ENCODE measurements at regions of chr12 and their contacts with region 1.

Region 1: GRCh38 chr12:47779301-47779942 is 6.4 kb downstream of the SLC48A1 start:
- DNase-seq: peak; percentile 97
- ATAC-seq: peak; percentile 85
- H3K4me3 Mint-ChIP-seq: peak overlapping the region; percentile 44
- H3K27ac Mint-ChIP-seq: peak overlapping the region; percentile 37; the same call in 1 of the 2 replicates
- H3K4me1 Mint-ChIP-seq: peaks cover 32% of the 10 kb centered on the region
- H3K27me3 Mint-ChIP-seq: peaks cover 11% of the 10 kb centered on the region
- CTCF ChIP-seq: peak; percentile 93

Region 2: GRCh38 chr12:47591361-47591791 is 188.0 kb before region 1 on chr12:
- CTCF ChIA-PET with region 1: no interaction called
- POLR2A ChIA-PET with region 1: no interaction called
- DNase-seq: no peak
- ATAC-seq: 0 out of 2 replicates have a peak, but pooled peaks have one; percentile 32
- H3K4me3 Mint-ChIP-seq: no peak overlapping the region
- H3K27ac Mint-ChIP-seq: no peak overlapping the region
- H3K4me1 Mint-ChIP-seq: peaks cover 13% of the 10 kb centered on the region
- H3K27me3 Mint-ChIP-seq: no peaks in the 10 kb centered on the region; the same call in 1 of the 2 replicates
- CTCF ChIP-seq: no peak

Region 3: DNA sequence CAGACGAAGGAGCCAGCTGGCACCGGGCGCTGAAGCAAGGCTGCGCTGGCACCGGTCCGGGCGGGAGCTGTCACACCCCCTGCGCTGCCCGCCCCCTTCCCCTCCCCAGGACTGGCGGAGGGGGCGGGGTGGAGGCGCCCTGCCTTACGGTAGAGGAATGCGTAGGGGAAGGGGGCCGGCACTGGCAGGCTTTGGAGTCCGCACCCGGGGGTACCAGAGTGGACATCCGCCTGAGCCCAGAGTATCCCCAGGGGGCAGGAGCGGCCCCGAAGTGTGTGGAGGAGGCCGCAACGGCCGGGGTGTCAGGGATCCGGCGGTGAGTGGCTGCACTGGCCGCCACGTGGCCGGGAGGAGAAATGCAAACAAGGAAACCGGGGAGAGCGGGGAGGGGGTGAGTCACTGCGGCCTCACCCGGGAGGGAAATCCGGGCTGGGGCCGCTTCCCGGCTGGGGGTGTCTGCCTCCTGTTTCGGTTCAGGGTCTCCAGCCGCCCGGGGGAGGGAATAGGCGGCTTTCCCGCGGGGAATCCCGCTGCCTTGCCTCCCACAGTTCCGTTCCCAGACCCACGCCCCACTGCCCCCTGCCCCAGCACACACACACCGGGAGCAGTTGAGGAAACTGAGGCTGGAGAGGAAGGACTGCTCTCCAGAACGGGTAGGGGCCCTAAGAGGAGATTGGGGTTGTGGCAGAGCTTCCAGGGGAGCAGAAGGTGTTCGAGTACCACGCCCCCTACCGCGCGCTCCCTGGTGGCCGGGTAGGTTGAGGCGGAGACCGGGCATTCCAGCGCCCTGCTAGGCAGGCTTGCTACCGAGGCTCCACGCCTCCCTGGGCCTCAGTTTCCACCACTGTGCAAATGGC is 20.4 kb before region 1 on chr12 and contains the start of gene RAPGEF3:
- CTCF ChIA-PET with region 1: interaction called, 67 read pairs
- POLR2A ChIA-PET with region 1: no interaction called
- DNase-seq: peak; percentile 74
- ATAC-seq: peak; percentile 79
- H3K4me3 Mint-ChIP-seq: peak within 1 kb of the TSS; percentile 67
- H3K27ac Mint-ChIP-seq: no peak within 1 kb of the TSS
- H3K4me1 Mint-ChIP-seq: peaks cover 53% of the 10 kb centered on the region
- H3K27me3 Mint-ChIP-seq: no peaks in the 10 kb centered on the region; the same call in 1 of the 2 replicates
- CTCF ChIP-seq: no peak; the same call in 1 of the 2 replicates
- total RNA-seq, gene RAPGEF3: 9.0 to 13.3 TPM (median 9.7 TPM) in 3 replicates

Region 4: DNA sequence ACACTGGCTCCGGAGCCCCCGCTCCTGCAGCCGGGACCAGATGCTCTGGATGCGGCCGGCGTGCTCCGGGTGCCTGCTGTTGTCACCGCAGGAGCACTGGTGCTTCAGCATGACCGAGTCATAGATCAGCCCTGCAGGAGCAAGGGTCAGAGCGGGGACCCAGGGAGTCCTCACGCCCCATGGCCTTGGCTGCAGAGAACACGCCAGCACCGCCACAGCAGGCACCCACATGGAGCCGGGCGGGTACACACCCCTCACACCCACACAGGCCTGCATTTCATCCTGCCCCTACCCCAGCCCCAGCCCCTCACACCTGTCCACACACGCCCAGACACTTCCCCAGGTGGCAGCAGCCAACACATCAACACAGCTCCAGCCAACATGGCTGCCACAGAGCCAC is 12.5 kb after region 1 on chr12:
- CTCF ChIA-PET with region 1: interaction called, 49 read pairs
- POLR2A ChIA-PET with region 1: no interaction called
- DNase-seq: no peak
- ATAC-seq: no peak
- H3K4me3 Mint-ChIP-seq: no peak overlapping the region
- H3K27ac Mint-ChIP-seq: peak overlapping the region; percentile 72; the same call in 1 of the 2 replicates
- H3K4me1 Mint-ChIP-seq: no peaks in the 10 kb centered on the region
- H3K27me3 Mint-ChIP-seq: no peaks in the 10 kb centered on the region
- CTCF ChIP-seq: no peak

Region 5: GRCh38 chr12:47812797-47813510 is 33.5 kb after region 1 on chr12:
- CTCF ChIA-PET with region 1: interaction called, 23 read pairs
- POLR2A ChIA-PET with region 1: interaction called, 3 read pairs
- DNase-seq: peak; percentile 87
- ATAC-seq: peak; percentile 68
- H3K4me3 Mint-ChIP-seq: peak overlapping the region; percentile 60
- H3K27ac Mint-ChIP-seq: peak overlapping the region; percentile 98
- H3K4me1 Mint-ChIP-seq: peaks cover 83% of the 10 kb centered on the region
- H3K27me3 Mint-ChIP-seq: no peaks in the 10 kb centered on the region
- CTCF ChIP-seq: no peak